HepG2 (cell line): ENCODE measurements at regions of chrX and their contacts with region 1.

Region 1: GRCh38 chrX:41002026-41002425 is 83.2 kb upstream of the USP9X start:
- DNase-seq: peak; percentile 64
- ATAC-seq: peak; percentile 84
- H3K4me3 ChIP-seq: peak overlapping the region; percentile 35 to 44 (median 40); a peak in 5 of 6 replicates
- H3K27ac ChIP-seq: peak overlapping the region; percentile 83
- H3K4me1 ChIP-seq: peaks cover 48% of the 10 kb centered on the region
- H3K27me3 ChIP-seq: no peaks in the 10 kb centered on the region
- CTCF ChIP-seq: no peak
- EP300 ChIP-seq: peak in 1 of 2 experiments; percentile 35; a peak in 1 of 4 replicates
- POLR2A ChIP-seq: peak in 1 of 2 experiments; percentile 35; a peak in 1 of 4 replicates
- RAD21 ChIP-seq: no peak

Region 2: DNA sequence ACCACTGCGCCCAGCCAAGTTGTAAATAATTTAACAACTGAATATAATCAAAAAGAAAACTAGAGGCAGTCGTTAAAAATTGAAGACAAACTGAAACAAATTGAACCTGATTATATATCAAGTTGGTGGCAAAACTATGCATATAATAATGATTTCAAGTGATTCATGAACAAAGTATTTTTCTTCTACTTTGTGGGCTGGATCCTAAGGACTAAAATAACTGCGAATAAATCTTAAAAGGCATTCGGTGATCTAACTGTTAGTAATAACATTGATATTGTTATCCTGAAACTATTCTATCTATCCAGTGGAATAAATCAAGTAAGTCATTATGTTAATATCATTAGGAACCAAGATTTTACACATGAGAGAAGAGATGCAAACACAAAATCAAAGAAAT is 62.0 kb after region 1 on chrX:
- CTCF ChIA-PET with region 1: no interaction called
- POLR2A ChIA-PET with region 1: no interaction called
- in situ Hi-C with region 1: no loop called
- intact Hi-C with region 1: no loop called
- DNase-seq: no peak
- ATAC-seq: no peak
- H3K4me3 ChIP-seq: no peak overlapping the region
- H3K27ac ChIP-seq: no peak overlapping the region
- H3K4me1 ChIP-seq: no peaks in the 10 kb centered on the region
- H3K27me3 ChIP-seq: peaks cover 0 to 3% of the 10 kb centered on the region in 2 experiments; a peak in 1 of 5 replicates
- CTCF ChIP-seq: no peak
- EP300 ChIP-seq: no peak
- POLR2A ChIP-seq: no peak
- RAD21 ChIP-seq: no peak

Region 3: GRCh38 chrX:41084044-41084892 is 82.2 kb after region 1 on chrX:
- CTCF ChIA-PET with region 1: no interaction called
- POLR2A ChIA-PET with region 1: interaction called, 19 read pairs
- in situ Hi-C with region 1: no loop called
- intact Hi-C with region 1: no loop called
- DNase-seq: peak; percentile 87
- ATAC-seq: peak; percentile 79
- H3K4me3 ChIP-seq: peak overlapping the region; percentile 84 to 96 (median 85)
- H3K27ac ChIP-seq: peak overlapping the region; percentile 100
- H3K4me1 ChIP-seq: peaks cover 17% of the 10 kb centered on the region
- H3K27me3 ChIP-seq: no peaks in the 10 kb centered on the region
- CTCF ChIP-seq: 0 out of 2 replicates have a peak, but pooled peaks have one; percentile 5
- EP300 ChIP-seq: no peak; a peak in 1 of 4 replicates
- POLR2A ChIP-seq: peak; percentile 68 to 84
- RAD21 ChIP-seq: peak; percentile 25; the same call in 1 of the 2 replicates

Region 4: DNA sequence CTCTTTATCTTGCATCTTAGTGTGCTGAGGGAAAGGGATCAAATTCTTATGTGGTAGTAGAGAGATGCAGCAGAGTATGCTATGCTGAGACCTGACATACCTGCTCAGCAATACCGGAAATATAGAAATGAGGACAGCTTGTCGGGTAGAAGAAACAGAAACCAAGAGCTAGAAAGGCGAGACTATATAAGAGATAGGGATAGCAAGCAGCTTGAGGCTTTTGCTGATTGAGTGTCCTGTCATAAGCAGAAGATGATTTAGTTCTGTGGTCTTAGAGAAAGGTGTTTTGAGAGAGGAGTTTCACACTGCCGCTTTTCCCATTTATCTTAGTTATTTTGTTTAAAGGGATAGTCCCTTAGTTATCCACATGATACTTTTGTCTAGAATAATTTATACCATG is 114.9 kb after region 1 on chrX:
- CTCF ChIA-PET with region 1: no interaction called
- POLR2A ChIA-PET with region 1: interaction called, 3 read pairs
- in situ Hi-C with region 1: loop called (anchors 10 kb)
- intact Hi-C with region 1: loop called (anchors 2 kb)
- DNase-seq: no peak
- ATAC-seq: no peak
- H3K4me3 ChIP-seq: no peak overlapping the region
- H3K27ac ChIP-seq: no peak overlapping the region
- H3K4me1 ChIP-seq: peaks cover 16% of the 10 kb centered on the region; the same call in 1 of the 2 replicates
- H3K27me3 ChIP-seq: no peaks in the 10 kb centered on the region
- CTCF ChIP-seq: no peak
- EP300 ChIP-seq: no peak
- POLR2A ChIP-seq: no peak
- RAD21 ChIP-seq: no peak